Ovary (tissue), 10 donors: ENCODE measurements at regions of chr12 and their contacts with region 1.

Region 1: DNA sequence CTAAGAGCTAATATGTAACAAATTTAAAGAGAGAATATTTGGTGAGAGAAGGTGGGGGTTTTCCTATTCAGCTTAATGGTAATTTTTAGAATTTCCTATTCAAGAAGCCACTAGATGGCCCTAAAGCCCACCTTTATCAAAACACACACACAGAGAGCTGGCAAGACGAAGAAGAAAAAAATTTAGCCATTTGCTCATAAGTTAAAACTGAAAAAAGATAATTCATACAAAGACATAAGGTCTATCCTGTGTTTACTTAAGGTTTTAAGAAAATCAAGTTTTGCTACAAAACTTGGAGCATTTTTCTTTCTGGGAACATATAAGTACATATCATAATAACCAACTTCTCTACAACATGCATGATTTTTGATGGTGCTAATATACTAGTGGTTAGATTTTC is 46.8 kb upstream of the PCED1B start:
- DNase-seq: no peak
- H3K4me3 ChIP-seq: no peak overlapping the region
- H3K27ac ChIP-seq: no peak overlapping the region
- H3K4me1 ChIP-seq: peaks cover 4% of the 10 kb centered on the region
- H3K27me3 ChIP-seq: no peaks in the 10 kb centered on the region
- CTCF ChIP-seq: peak; percentile 31 to 88 (median 55)
- EP300 ChIP-seq: no peak
- POLR2A ChIP-seq: no peak

Region 2: DNA sequence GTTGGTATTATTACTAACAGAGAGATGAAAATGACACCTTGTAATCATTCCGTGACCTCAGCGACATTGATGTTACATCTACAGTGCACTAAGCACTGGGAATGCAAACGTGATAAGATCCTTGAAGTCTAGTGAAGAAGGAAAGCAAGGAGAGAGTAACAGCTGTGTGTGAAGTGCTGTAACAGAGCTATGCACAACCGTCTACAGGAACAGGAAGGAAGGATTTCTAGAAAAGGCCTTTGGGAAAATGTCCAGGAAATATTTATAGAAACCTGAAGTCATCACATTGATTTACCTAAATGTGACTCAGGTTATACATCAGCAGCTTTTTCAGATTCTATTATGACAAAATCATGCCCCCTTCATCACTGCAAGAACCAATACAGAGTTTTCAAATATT is 351.3 kb after region 1 on chr12:
- intact Hi-C with region 1: loop called in 1 of 4 experiments (anchors 10 kb)
- DNase-seq: no peak
- H3K4me3 ChIP-seq: no peak overlapping the region
- H3K27ac ChIP-seq: no peak overlapping the region
- H3K4me1 ChIP-seq: no peaks in the 10 kb centered on the region
- H3K27me3 ChIP-seq: no peaks in the 10 kb centered on the region
- CTCF ChIP-seq: no peak
- EP300 ChIP-seq: no peak
- POLR2A ChIP-seq: no peak

Region 3: DNA sequence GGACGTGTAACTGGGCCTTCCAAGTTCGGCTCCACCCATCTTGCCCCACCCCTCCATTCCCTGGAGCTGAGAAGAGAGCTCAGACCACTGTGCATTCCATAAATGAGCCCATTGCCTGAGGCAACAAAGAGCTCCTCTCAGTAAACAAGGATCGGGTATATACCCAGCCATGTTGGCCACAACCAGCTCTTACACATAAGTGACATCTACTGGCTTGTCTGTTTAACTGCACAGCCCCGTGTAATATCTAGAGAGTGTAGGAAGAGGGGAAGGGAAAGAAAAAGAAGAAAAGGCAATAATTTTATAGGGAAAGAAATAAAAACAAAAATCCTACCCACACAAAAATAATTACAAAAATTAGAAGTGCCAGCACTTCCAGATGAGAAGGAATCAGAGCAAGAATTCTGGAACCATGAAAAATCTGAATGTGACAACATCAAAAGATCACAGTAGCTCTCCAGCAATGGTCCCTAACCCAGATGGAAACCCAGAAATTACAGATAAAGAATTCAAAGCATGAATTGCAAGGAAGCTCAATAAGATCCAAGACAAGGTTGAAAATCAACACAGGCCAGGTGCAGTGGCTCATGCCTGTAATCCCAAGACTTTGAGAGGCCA is 365.1 kb after region 1 on chr12:
- intact Hi-C with region 1: loop called in 2 of 4 experiments (anchors 10 kb)
- DNase-seq: no peak
- H3K4me3 ChIP-seq: no peak overlapping the region
- H3K27ac ChIP-seq: no peak overlapping the region
- H3K4me1 ChIP-seq: no peaks in the 10 kb centered on the region
- H3K27me3 ChIP-seq: no peaks in the 10 kb centered on the region
- CTCF ChIP-seq: no peak
- EP300 ChIP-seq: no peak
- POLR2A ChIP-seq: no peak

Region 4: DNA sequence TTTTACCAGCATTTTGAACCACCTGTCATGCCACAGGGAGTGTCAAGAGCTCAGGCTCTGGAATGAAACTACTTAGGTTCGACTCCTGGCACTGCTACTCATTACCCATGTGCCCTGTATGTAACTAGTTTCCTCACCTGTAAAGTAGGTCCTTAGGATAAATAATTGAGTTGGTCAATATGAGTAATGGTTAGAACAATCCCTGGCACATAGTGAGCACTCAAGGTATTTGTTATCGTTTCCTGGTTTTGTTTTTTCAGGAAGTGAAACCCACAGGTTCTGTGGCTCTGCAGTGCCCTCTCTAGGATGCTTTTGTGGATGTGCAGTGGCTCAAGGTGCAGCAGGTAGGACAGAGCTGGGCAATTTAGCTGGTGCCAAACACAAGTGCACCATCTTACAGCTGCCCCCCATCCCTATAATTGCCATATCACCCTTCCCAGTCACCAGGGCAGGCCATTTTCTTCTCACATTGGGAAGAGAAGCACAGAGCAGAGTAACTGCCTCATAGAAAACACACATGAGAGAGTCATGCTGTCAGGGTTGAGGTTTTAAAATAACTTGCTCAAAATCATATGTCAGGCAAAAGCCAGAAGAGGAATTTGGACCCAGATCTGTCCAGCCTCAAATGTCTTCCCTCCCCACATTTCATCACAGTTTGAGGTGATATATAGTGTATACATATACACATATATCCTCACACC is 375.7 kb after region 1 on chr12:
- intact Hi-C with region 1: loop called in 1 of 4 experiments (anchors 10 kb)
- DNase-seq: no peak
- H3K4me3 ChIP-seq: no peak overlapping the region
- H3K27ac ChIP-seq: no peak overlapping the region
- H3K4me1 ChIP-seq: no peaks in the 10 kb centered on the region
- H3K27me3 ChIP-seq: no peaks in the 10 kb centered on the region
- CTCF ChIP-seq: no peak
- EP300 ChIP-seq: no peak
- POLR2A ChIP-seq: no peak

Region 5: DNA sequence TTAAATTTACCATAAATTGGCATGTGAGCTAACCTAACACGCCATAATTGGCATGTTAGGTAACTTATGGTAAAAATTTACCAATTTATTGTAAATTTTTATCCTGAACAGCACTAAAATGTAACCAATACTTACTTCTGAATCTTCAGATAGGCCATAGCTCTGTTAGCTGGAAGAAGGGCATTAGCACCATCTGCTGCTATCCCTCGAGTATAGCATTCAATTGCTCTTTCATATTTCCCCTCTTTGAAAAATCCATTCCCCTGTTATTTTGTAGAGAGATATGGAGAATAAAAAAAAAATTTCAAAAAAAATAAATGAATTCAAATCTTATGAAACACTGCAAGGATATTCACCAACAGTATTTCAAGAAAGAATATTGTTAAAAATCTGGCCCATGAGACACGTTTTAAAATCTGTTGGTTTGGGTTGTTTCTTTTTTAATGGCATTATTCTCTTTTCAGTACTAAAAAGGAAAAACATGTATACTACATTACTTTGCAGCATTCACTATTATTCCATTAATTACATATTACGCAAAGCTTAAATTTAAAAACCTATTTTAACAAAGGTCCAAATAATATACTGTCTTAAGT is 654.1 kb after region 1 on chr12:
- intact Hi-C with region 1: loop called in 1 of 4 experiments (anchors 5 kb)
- DNase-seq: no peak
- H3K4me3 ChIP-seq: no peak overlapping the region
- H3K27ac ChIP-seq: no peak overlapping the region
- H3K4me1 ChIP-seq: no peaks in the 10 kb centered on the region
- H3K27me3 ChIP-seq: no peaks in the 10 kb centered on the region
- CTCF ChIP-seq: peak; percentile 32 to 67 (median 46)
- EP300 ChIP-seq: no peak
- POLR2A ChIP-seq: no peak

Region 6: GRCh38 chr12:47705566-47706425 is 673.2 kb after region 1 on chr12 and contains the start of gene RPAP3:
- intact Hi-C with region 1: loop called in 1 of 4 experiments (anchors 10 kb)
- DNase-seq: peak; percentile 97 to 98 (median 97)
- H3K4me3 ChIP-seq: peak within 1 kb of the TSS; percentile 99
- H3K27ac ChIP-seq: peak within 1 kb of the TSS; percentile 64 to 81
- H3K4me1 ChIP-seq: peaks cover 8% of the 10 kb centered on the region
- H3K27me3 ChIP-seq: no peaks in the 10 kb centered on the region
- CTCF ChIP-seq: peak; percentile 76 to 87 (median 84)
- EP300 ChIP-seq: no peak
- POLR2A ChIP-seq: peak; percentile 65
- total RNA-seq, gene RPAP3: 18.4 to 71.3 (median 41.8) TPM